Mammary epithelial cell (primary cell): ENCODE measurements at regions of chr7 and their contacts with region 1.

Region 1: GRCh38 chr7:1779445-1779844 is 109.4 kb downstream of the ELFN1 start:
- DNase-seq: no peak
- H3K4me3 ChIP-seq: no peak overlapping the region
- H3K27ac ChIP-seq: no peak overlapping the region
- H3K4me1 ChIP-seq: no peaks in the 10 kb centered on the region
- H3K27me3 ChIP-seq: no peaks in the 10 kb centered on the region
- CTCF ChIP-seq: no peak

Region 2: DNA sequence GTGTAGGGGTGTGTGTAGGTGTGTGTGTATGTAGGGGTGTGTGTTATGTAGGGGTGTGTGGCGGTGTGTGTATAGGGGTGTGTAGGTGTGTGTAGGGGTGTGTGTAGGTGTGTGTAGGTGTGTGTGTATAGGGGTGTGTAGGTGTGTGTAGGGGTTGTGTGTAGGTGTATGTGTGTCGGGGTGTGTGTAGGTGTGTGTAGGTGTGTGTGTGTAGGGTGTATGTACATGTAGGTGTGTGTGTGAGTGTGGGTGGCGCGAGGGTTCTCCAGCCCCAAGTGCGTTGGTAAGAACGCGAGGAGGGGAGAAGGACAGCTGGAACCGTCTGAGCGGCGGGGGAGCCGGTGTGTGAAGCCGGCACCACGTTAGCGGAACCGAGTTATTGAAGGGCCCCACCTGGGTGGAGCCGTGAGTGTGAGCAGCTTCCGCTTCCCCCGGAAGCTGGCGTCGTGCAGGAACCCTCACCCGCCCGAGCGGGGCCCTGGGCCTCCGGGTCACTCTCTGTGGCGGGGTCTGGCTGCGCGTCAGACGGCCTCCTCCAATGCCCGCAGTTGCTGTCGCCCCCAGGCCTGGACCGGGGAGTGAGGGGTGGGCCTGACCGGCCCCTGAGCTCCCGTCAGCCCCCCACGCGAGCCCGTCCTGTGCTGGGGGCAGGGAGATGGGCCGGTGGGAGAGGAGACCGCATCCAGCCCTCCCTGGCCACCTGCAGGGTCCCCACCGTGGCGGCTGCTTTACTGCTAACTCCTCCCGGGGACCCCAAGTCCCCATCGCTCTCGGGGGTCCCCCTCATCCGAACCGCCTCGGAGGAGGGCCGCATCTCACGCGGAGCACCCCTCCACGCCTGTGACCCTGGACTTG is 160.1 kb before region 1 on chr7:
- CTCF ChIA-PET with region 1: no interaction called
- dilution Hi-C with region 1: loop called (anchors 5 kb)
- in situ Hi-C with region 1: no loop called
- intact Hi-C with region 1: no loop called
- DNase-seq: no peak
- H3K4me3 ChIP-seq: no peak overlapping the region
- H3K27ac ChIP-seq: no peak overlapping the region
- H3K4me1 ChIP-seq: no peaks in the 10 kb centered on the region
- H3K27me3 ChIP-seq: no peaks in the 10 kb centered on the region
- CTCF ChIP-seq: no peak

Region 3: DNA sequence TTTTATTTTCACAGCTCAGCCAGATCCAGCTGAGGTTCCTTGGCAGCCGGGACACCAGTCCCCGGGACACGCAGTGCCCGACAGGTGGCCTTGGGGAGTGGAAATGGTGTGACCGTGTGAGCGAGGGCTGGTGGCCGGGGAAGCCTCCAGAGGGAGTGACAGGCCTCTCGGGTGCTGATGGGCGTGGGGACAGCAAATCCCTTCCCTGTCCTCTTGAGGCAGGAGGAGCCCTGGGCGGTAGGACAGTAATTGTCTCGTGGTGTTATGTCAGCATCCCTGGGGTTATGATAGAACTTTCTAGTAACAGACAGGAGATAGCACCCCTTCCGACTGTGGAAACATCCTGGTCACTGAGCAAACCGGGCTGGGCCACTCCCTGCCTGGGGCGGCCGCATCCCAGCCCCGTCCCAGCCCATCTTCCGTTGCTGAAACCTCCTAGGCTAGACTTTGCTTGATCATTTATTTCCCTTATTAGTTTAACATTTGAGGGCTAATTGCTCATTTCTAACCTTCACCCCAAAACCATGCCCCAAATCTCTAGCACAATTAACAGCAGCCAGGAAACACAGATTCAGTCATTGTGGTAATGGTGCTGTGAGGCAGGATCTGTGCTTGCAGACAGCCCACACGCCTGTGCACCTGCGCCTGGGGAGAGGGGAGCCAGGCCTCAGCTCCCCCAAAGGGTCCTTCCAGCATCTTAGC is 46.1 kb before region 1 on chr7:
- CTCF ChIA-PET with region 1: no interaction called
- dilution Hi-C with region 1: loop called (anchors 5 kb)
- in situ Hi-C with region 1: no loop called
- intact Hi-C with region 1: no loop called
- DNase-seq: no peak
- H3K4me3 ChIP-seq: no peak overlapping the region
- H3K27ac ChIP-seq: no peak overlapping the region
- H3K4me1 ChIP-seq: no peaks in the 10 kb centered on the region
- H3K27me3 ChIP-seq: peaks cover 4% of the 10 kb centered on the region
- CTCF ChIP-seq: no peak

Region 4: GRCh38 chr7:1758028-1758858 is 21.2 kb before region 1 on chr7:
- CTCF ChIA-PET with region 1: interaction called, 17 read pairs
- dilution Hi-C with region 1: no loop called
- in situ Hi-C with region 1: no loop called
- intact Hi-C with region 1: no loop called
- DNase-seq: peak; percentile 11
- H3K4me3 ChIP-seq: no peak overlapping the region
- H3K27ac ChIP-seq: no peak overlapping the region
- H3K4me1 ChIP-seq: no peaks in the 10 kb centered on the region
- H3K27me3 ChIP-seq: no peaks in the 10 kb centered on the region
- CTCF ChIP-seq: peak in 1 of 2 donors; percentile 43

Region 5: DNA sequence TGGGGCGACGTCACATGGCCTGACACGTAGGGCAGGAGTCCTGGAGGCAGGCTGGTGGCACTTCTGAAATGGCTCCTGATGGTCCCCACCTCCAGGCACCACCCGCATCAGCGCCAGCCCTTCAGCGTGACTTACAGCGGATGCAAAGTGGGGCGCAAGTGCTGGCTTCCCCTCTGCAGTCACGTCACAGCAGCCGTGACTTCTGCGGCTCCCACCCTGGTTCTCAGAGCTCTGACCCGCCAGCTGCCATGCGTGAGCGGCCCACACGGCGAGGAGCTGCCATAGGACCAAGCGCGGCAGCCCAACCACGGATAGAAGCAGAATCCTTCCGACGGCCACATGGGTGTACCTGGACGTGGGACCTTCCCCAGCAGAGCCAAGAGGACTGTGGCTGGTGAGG is 49.7 kb after region 1 on chr7:
- CTCF ChIA-PET with region 1: no interaction called
- dilution Hi-C with region 1: no loop called
- in situ Hi-C with region 1: no loop called
- intact Hi-C with region 1: no loop called
- DNase-seq: no peak
- H3K4me3 ChIP-seq: no peak overlapping the region
- H3K27ac ChIP-seq: no peak overlapping the region
- H3K4me1 ChIP-seq: no peaks in the 10 kb centered on the region
- H3K27me3 ChIP-seq: no peaks in the 10 kb centered on the region
- CTCF ChIP-seq: no peak

Region 6: GRCh38 chr7:1853986-1854865 is 74.8 kb after region 1 on chr7:
- CTCF ChIA-PET with region 1: no interaction called
- dilution Hi-C with region 1: loop called (anchors 5 kb)
- in situ Hi-C with region 1: no loop called
- intact Hi-C with region 1: no loop called
- DNase-seq: no peak
- H3K4me3 ChIP-seq: no peak overlapping the region
- H3K27ac ChIP-seq: no peak overlapping the region
- H3K4me1 ChIP-seq: no peaks in the 10 kb centered on the region
- H3K27me3 ChIP-seq: no peaks in the 10 kb centered on the region
- CTCF ChIP-seq: no peak

Region 7: GRCh38 chr7:1889556-1890181 is 110.2 kb after region 1 on chr7:
- CTCF ChIA-PET with region 1: no interaction called
- dilution Hi-C with region 1: loop called (anchors 5 kb)
- in situ Hi-C with region 1: no loop called
- intact Hi-C with region 1: no loop called
- DNase-seq: no peak
- H3K4me3 ChIP-seq: no peak overlapping the region
- H3K27ac ChIP-seq: no peak overlapping the region
- H3K4me1 ChIP-seq: peaks cover 22% of the 10 kb centered on the region
- H3K27me3 ChIP-seq: no peaks in the 10 kb centered on the region
- CTCF ChIP-seq: no peak

Region 8: GRCh38 chr7:2241580-2242540 is 462.4 kb after region 1 on chr7 and contains the starts of genes MRM2 and NUDT1:
- CTCF ChIA-PET with region 1: no interaction called
- dilution Hi-C with region 1: no loop called
- in situ Hi-C with region 1: no loop called
- intact Hi-C with region 1: no loop called
- DNase-seq: peak; percentile 79
- H3K4me3 ChIP-seq: peak within 1 kb of the TSS; percentile 91 to 95 (median 93)
- H3K27ac ChIP-seq: peak within 1 kb of the TSS; percentile 41
- H3K4me1 ChIP-seq: peaks cover 27% of the 10 kb centered on the region
- H3K27me3 ChIP-seq: no peaks in the 10 kb centered on the region
- CTCF ChIP-seq: no peak
- total RNA-seq, gene MRM2: 14.0 to 29.9 TPM
- total RNA-seq, gene NUDT1: 5.7 to 26.4 TPM